ENCODE measurements at regions of chr7 and their contacts with region 1.

Region 1: DNA sequence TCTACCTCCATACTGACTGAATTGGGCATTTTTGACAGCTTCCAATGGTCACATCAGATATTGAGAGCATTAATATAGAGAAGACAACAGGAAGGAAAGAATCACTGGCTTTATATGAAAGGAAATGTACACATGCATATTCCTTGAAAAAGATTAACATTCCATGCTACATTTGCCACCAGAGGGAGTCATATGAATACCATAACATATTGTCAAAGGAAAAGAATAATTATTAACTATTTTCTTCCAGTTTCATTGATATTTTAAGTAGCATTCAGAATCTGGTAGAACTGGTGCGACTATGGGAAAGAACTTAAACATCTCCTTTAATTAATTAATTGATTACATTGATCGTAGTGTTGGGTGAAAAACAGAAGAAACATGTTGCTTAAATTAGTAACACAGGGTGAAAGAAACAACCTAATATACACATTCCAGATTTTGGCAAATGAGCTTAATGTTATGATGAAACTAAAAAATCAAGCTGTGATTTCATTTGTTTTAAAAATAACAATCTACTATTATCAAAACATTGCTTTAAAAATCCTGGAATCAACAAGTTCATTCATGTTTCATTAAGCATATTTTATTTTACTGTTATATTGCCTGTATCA is 71.5 kb downstream of the GPR85 start:
- ATAC-seq: peak in 2 of 8 experiments; percentile 46 to 54
- H3K4me3 ChIP-seq: no peak overlapping the region
- H3K27ac ChIP-seq: no peak overlapping the region
- H3K4me1 ChIP-seq: peaks cover 0 to 7% of the 10 kb centered on the region in 2 donors

Region 2: DNA sequence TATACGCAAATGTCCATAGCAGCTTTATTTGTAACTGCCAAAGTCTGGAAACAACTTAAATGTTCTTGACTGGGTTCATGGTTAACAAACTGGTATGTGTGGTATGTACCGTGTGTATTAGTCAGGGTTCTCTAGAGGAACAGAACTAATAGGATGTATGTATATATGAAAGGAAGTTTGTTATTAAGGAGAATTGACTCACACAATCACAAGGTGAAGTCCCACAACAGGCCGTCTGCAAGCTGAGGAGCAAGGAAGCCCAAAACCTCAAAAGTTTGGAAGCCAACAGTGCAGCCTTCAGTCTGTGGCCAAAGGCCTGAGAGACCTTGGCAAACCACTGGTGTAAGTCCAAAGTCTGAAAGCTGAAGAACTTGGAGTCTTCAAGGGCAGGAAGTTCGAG is 291.7 kb before region 1 on chr7:
- in situ Hi-C with region 1: no loop called
- ATAC-seq: no peak
- H3K4me3 ChIP-seq: no peak overlapping the region
- H3K27ac ChIP-seq: no peak overlapping the region
- H3K4me1 ChIP-seq: no peaks in the 10 kb centered on the region

Region 3: GRCh38 chr7:113349339-113349738 is 334.2 kb after region 1 on chr7:
- in situ Hi-C with region 1: no loop called
- ATAC-seq: no peak
- H3K4me3 ChIP-seq: no peak overlapping the region
- H3K27ac ChIP-seq: no peak overlapping the region
- H3K4me1 ChIP-seq: no peaks in the 10 kb centered on the region

Region 4: DNA sequence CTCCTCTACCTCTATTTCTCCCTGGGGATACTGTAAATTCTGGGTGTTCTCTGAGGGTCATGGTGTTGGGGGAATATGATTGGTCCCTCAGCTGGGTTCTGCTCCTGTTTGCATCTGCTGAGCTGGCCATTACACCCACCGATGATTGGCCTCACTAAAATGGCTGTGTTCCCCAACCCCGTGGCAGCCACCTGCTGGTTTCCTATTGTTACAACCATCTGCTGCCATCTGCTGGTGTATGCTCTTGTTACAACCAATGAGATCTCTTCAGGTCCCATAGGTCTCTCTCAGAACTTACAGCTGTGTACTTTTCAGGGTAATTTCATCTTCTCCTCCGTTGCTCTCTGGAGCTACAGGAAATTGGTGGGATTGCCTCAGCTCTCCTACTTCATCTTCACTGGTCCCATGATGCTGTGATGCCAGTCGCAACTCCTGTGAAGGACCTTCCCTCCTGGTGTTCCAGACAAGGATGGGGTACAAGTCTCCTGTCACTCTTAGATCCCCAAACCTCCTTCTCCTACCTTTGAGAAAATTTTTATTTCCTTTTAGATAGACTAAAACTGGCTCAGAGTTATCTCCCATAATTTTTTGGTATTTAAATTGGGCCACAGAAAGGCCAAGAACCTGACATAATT is 406.7 kb after region 1 on chr7:
- in situ Hi-C with region 1: loop called in 2 of 9 experiments (anchors 25 kb)
- ATAC-seq: peak; percentile 65 to 100 (median 83)
- H3K4me3 ChIP-seq: no peak overlapping the region
- H3K27ac ChIP-seq: no peak overlapping the region
- H3K4me1 ChIP-seq: peaks cover 0 to 12% of the 10 kb centered on the region in 2 donors

Region 5: DNA sequence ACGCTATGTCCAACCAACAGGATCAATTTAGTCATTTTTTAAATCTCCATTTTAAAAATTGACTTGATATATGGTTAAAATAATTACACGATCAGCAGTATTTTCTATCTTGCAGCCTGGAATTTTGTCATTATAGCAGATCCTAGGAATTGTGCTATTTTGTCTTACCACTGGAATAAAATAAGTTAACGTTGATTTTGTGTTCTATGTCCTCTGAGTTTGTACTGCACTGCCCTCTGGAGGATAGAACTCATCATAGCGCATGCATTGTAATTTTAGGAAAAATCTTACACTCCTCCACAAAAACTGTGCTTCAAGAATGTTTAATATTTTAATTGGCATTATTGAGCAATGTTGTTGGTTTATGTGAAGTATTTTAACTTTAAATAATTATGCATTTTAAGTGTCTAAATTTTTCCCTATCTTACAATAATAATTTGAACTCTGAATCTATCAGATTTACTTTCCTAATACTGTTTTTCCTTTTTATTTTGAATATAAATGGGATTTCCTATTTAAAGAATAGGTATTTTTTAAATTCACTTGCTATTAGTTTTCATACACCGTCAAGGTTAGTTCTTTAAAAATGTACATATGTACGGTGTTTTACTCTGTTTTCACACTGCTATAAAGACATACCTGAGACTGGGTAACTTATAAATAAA is 683.5 kb after region 1 on chr7:
- in situ Hi-C with region 1: loop called in 2 of 9 experiments (anchors 25 kb)
- ATAC-seq: peak in 1 of 8 experiments; percentile 47
- H3K4me3 ChIP-seq: no peak overlapping the region
- H3K27ac ChIP-seq: no peak overlapping the region
- H3K4me1 ChIP-seq: no peaks in the 10 kb centered on the region

Region 6: GRCh38 chr7:113710310-113711106 is 695.4 kb after region 1 on chr7:
- in situ Hi-C with region 1: loop called in 1 of 9 experiments (anchors 25 kb)
- ATAC-seq: peak in 7 of 8 experiments; percentile 36 to 90 (median 63)
- H3K4me3 ChIP-seq: no peak overlapping the region
- H3K27ac ChIP-seq: no peak overlapping the region
- H3K4me1 ChIP-seq: no peaks in the 10 kb centered on the region